Ovary (tissue), 10 donors: ENCODE measurements at regions of chr5 and their contacts with region 1.

Region 1: DNA sequence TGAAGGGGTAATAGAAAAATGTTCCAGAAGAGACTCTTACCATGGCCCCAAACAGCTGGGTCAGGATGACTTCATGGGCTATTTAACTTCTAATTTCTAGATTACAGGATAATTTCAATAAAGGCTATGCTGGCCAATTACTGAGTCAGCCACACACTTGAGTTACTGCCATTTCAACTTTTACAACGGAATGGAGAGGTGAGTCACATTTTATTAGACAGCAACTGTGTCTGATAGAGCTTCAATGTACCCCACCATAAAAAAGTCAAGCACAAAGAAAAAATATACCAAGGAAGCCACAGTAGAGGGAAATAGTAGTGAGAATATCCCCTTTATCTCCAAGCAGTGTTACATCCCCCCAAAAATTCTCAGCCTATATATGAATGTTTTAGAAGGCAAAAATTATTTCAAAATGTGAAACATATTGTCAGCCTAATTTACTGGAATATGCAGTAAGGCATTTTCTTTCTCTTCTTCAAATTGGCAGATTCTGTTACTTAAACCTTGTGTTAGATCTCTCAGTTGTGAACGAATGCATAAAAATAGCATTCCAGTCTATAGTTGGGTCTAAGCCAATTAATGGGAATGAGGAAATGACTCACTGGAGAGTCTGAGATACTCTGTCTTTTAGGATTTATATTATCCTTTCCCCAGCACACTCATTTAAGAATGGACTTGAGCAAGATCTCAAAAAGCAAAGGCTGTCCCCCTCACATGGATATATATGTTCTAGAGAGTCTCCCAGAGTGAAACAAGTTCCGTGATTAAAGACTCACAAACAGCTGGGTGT is 47.1 kb upstream of the RAI14 start:
- DNase-seq: no peak
- H3K4me3 ChIP-seq: no peak overlapping the region
- H3K27ac ChIP-seq: no peak overlapping the region
- H3K4me1 ChIP-seq: no peaks in the 10 kb centered on the region
- H3K27me3 ChIP-seq: no peaks in the 10 kb centered on the region
- CTCF ChIP-seq: no peak
- EP300 ChIP-seq: no peak
- POLR2A ChIP-seq: no peak

Region 2: GRCh38 chr5:35046774-35047173 is 437.7 kb after region 1 on chr5:
- intact Hi-C with region 1: loop called in 1 of 4 experiments (anchors 10 kb)
- DNase-seq: no peak
- H3K4me3 ChIP-seq: no peak overlapping the region
- H3K27ac ChIP-seq: no peak overlapping the region
- H3K4me1 ChIP-seq: no peaks in the 10 kb centered on the region
- H3K27me3 ChIP-seq: no peaks in the 10 kb centered on the region
- CTCF ChIP-seq: no peak
- EP300 ChIP-seq: no peak
- POLR2A ChIP-seq: no peak